GM12878 (cell line): ENCODE measurements at regions of chr2 and their contacts with region 1.

Region 1: DNA sequence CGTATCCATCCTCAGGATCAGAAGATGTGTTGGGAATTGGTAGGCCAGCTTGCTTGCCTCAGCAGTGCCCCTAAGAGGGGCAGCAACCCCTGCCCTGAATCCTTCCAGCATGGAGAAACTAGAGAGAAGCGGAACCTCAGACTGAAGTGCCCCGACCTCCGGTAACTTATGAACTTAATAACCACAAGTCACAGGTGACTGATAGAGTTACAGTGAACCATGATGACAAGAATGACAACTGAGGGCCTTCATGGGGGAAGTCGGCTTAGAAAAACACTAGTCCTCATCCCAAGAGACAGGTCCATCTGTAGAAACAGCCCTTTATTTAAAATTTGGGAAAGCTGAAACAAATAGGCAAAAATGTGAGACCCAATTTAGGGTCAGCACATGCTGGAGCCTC is 42.5 kb upstream of the TMEM87B start:
- DNase-seq: no peak
- ATAC-seq: peak; percentile 67
- H3K4me3 ChIP-seq: no peak overlapping the region
- H3K27ac ChIP-seq: no peak overlapping the region
- H3K4me1 ChIP-seq: no peaks in the 10 kb centered on the region; the same call in 1 of the 2 replicates
- H3K27me3 ChIP-seq: no peaks in the 10 kb centered on the region
- CTCF ChIP-seq: no peak
- EP300 ChIP-seq: no peak
- POLR2A ChIP-seq: no peak
- RAD21 ChIP-seq: no peak

Region 2: DNA sequence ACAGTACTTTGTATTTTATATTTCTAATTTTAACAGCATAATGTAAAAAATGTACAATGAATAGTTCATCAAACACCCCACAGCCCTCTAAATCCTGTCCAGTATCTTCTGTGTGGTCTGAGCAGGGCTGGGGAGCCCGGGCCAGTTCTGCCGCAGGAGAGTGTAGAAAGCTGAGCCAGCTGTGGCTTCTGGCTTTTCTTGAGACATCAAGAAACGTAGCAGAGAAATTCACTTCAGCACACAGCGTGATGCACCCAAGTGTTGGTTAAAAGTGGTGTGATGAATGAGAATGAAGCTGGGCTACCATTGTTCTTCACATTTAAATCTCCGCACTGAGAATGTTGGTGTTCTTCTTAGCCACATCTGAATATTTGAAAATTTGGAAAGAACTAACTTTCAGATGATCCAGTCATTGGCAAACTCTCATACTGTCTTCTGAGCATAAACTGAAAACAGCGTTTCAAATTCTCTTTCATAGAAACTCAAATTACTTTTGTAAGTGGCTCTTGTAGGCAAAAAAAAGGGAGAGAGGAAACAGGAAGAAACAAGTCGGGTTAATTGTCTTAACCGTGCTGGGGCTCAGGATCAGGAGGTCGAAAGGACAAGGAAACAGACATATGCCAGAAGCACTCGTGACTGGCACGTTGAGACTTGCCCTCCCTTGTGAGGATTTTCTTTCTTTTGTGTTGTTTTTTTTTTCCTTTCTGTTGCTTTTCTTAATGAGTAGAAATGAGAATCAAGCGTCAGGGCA is 19.1 kb after region 1 on chr2:
- CTCF ChIA-PET with region 1: no interaction called
- POLR2A ChIA-PET with region 1: interaction called, 4 read pairs
- RAD21 ChIA-PET with region 1: no interaction called
- SMC1A ChIA-PET with region 1: interaction called, 3 read pairs
- in situ Hi-C with region 1: no loop called
- intact Hi-C with region 1: loop called (anchors 2 kb)
- DNase-seq: no peak
- ATAC-seq: peak; percentile 54
- H3K4me3 ChIP-seq: no peak overlapping the region
- H3K27ac ChIP-seq: no peak overlapping the region
- H3K4me1 ChIP-seq: no peaks in the 10 kb centered on the region
- H3K27me3 ChIP-seq: no peaks in the 10 kb centered on the region
- CTCF ChIP-seq: no peak
- EP300 ChIP-seq: no peak
- POLR2A ChIP-seq: no peak
- RAD21 ChIP-seq: no peak

Region 3: GRCh38 chr2:112150447-112150846 is 137.9 kb after region 1 on chr2:
- CTCF ChIA-PET with region 1: no interaction called
- POLR2A ChIA-PET with region 1: no interaction called
- RAD21 ChIA-PET with region 1: no interaction called
- SMC1A ChIA-PET with region 1: no interaction called
- in situ Hi-C with region 1: no loop called
- intact Hi-C with region 1: no loop called
- DNase-seq: no peak
- ATAC-seq: no peak
- H3K4me3 ChIP-seq: no peak overlapping the region
- H3K27ac ChIP-seq: no peak overlapping the region
- H3K4me1 ChIP-seq: no peaks in the 10 kb centered on the region
- H3K27me3 ChIP-seq: no peaks in the 10 kb centered on the region; a peak in 1 of 4 replicates
- CTCF ChIP-seq: no peak
- EP300 ChIP-seq: no peak
- POLR2A ChIP-seq: no peak
- RAD21 ChIP-seq: no peak